ENCODE measurements at regions of chr9 and their contacts with region 1.

Region 1: GRCh38 chr9:129495534-129496325 is 125.2 kb downstream of the C9orf50 start:
- DNase-seq: peak; percentile 86
- ATAC-seq: peak; percentile 75
- H3K4me3 ChIP-seq: peak overlapping the region; percentile 56 to 79 (median 61)
- H3K27ac ChIP-seq: peak overlapping the region; percentile 92
- H3K4me1 ChIP-seq: peaks cover 79% of the 10 kb centered on the region
- H3K27me3 ChIP-seq: no peaks in the 10 kb centered on the region
- CTCF ChIP-seq: peak; percentile 50
- EP300 ChIP-seq: no peak
- POLR2A ChIP-seq: no peak; a peak in 1 of 4 replicates
- RAD21 ChIP-seq: peak; percentile 30; the same call in 1 of the 2 replicates

Region 2: GRCh38 chr9:129177791-129178559 is 317.8 kb before region 1 on chr9 and contains the start of gene IER5L:
- CTCF ChIA-PET with region 1: no interaction called
- POLR2A ChIA-PET with region 1: interaction called, 20 read pairs
- in situ Hi-C with region 1: no loop called
- intact Hi-C with region 1: no loop called
- DNase-seq: peak; percentile 90
- ATAC-seq: peak; percentile 77
- H3K4me3 ChIP-seq: peak within 1 kb of the TSS; percentile 83 to 94 (median 93)
- H3K27ac ChIP-seq: peak within 1 kb of the TSS; percentile 82
- H3K4me1 ChIP-seq: peaks cover 62% of the 10 kb centered on the region
- H3K27me3 ChIP-seq: peaks cover 6 to 36% of the 10 kb centered on the region in 2 experiments
- CTCF ChIP-seq: 0 out of 2 replicates have a peak, but pooled peaks have one; percentile 10
- EP300 ChIP-seq: 0 out of 4 replicates have a peak, but pooled peaks of 1 of the 2 experiments have one; percentile 3
- POLR2A ChIP-seq: peak in 1 of 2 experiments; percentile 98; a peak in 2 of 4 replicates
- RAD21 ChIP-seq: no peak
- total RNA-seq, gene IER5L: 2.5 and 3.3 TPM in 2 replicates

Region 3: DNA sequence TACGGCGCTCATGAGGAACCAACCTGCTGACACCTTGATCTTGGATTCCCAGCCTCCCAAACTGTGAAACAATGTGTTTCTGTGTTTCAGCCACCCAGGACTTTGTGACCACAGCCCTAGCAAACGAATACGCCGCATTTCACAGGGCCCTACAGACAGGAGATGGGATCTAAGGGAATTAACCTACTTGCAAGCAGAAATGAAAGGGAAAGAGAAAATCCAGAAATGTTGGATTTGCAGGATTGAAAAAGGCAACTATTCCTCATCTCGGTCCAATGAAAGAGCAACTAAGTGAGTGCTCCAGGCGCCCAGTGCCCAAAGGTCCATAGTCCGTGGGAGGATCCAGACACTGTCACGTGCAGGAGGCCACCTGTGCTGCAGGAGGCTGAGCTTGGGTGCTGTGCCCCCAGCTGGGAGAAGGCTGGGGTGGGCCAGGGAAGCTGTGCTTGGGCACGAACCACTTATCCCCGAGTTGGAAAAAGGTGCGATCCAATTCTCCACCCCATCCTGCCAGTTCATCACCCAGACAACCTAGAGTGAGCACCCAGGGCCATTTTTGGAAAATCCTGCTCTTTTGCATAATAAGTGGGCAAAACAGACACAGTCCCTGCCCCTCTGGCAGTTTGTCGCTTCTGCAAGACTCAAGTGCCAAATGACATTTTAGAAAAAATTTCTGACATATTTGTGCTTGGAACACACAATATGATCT is 52.8 kb before region 1 on chr9:
- CTCF ChIA-PET with region 1: no interaction called
- POLR2A ChIA-PET with region 1: interaction called, 15 read pairs
- in situ Hi-C with region 1: no loop called
- intact Hi-C with region 1: no loop called
- DNase-seq: peak; percentile 65
- ATAC-seq: peak; percentile 77
- H3K4me3 ChIP-seq: peak overlapping the region; percentile 8 to 54 (median 25); a peak in 5 of 6 replicates
- H3K27ac ChIP-seq: peak overlapping the region; percentile 32
- H3K4me1 ChIP-seq: peaks cover 56% of the 10 kb centered on the region
- H3K27me3 ChIP-seq: peaks cover 0 to 8% of the 10 kb centered on the region in 2 experiments; a peak in 3 of 5 replicates
- CTCF ChIP-seq: peak; percentile 53
- EP300 ChIP-seq: peak in 1 of 2 experiments; percentile 57; a peak in 2 of 4 replicates
- POLR2A ChIP-seq: peak in 1 of 2 experiments; percentile 29; a peak in 1 of 4 replicates
- RAD21 ChIP-seq: no peak

Region 4: DNA sequence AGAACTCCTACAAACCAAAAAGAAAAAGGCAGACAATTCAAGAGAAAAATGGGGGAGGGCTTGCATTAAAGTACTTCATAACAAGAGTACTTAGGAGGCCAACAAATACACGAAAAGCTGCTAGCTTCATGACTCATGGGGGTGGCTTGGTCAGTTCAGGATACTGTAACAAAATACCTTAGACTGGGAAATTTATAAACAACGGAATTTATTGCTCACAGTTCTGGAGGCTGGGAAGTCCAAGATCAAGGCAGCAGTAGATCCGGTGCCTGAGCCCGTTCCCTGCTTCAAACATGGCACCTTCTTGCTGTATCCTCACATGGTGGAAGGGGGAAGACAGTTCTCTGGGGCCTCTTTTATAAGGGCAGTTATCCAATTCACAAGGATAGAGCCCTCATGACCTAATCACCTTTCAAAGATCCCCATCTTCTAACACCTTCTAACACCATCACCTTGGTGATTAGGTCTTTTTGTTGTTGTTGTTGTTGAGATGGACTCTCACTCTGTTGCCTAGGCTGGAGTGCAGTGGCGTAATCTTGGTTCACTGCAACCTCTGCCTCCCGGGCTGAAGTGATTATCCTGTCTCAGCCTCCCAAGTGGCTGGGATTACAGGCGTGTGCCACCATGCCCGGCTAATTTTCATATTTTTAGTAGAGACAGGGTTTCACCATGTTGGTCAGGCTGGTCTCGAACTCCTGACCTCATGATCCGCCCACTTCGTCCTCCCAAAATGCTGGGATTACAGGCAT is 14.0 kb after region 1 on chr9:
- CTCF ChIA-PET with region 1: no interaction called
- POLR2A ChIA-PET with region 1: interaction called, 33 read pairs
- in situ Hi-C with region 1: no loop called
- intact Hi-C with region 1: no loop called
- DNase-seq: no peak
- ATAC-seq: no peak
- H3K4me3 ChIP-seq: no peak overlapping the region
- H3K27ac ChIP-seq: no peak overlapping the region
- H3K4me1 ChIP-seq: peaks cover 33% of the 10 kb centered on the region
- H3K27me3 ChIP-seq: no peaks in the 10 kb centered on the region
- CTCF ChIP-seq: no peak
- EP300 ChIP-seq: no peak
- POLR2A ChIP-seq: no peak
- RAD21 ChIP-seq: no peak

Region 5: DNA sequence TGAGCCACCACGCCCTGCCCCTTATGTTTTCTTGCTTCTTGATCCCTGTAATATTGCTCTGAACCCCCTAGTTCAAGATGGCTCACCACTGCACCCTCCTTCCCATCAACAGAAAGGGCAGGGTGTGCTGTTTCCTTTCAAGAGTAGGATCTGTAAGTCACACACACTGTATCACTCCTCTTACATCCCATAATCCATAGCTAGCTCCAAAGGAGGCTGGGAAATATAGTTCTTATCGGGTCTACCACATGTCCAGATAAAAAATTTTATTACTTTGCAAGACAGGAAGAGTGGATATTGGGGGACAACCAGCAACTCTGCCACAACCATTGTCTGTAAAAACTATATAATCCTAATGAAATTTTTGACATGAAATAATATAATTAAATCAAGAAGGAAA is 45.5 kb after region 1 on chr9:
- CTCF ChIA-PET with region 1: no interaction called
- POLR2A ChIA-PET with region 1: no interaction called
- in situ Hi-C with region 1: no loop called
- intact Hi-C with region 1: no loop called
- DNase-seq: no peak
- ATAC-seq: no peak
- H3K4me3 ChIP-seq: no peak overlapping the region
- H3K27ac ChIP-seq: no peak overlapping the region
- H3K4me1 ChIP-seq: no peaks in the 10 kb centered on the region
- H3K27me3 ChIP-seq: no peaks in the 10 kb centered on the region
- CTCF ChIP-seq: no peak
- EP300 ChIP-seq: no peak
- POLR2A ChIP-seq: no peak
- RAD21 ChIP-seq: no peak

Region 6: GRCh38 chr9:129584136-129584535 is 88.4 kb after region 1 on chr9:
- CTCF ChIA-PET with region 1: no interaction called
- POLR2A ChIA-PET with region 1: interaction called, 12 read pairs
- in situ Hi-C with region 1: no loop called
- intact Hi-C with region 1: no loop called
- DNase-seq: peak; percentile 82
- ATAC-seq: peak; percentile 74
- H3K4me3 ChIP-seq: no peak overlapping the region
- H3K27ac ChIP-seq: peak overlapping the region; percentile 45
- H3K4me1 ChIP-seq: peaks cover 70% of the 10 kb centered on the region
- H3K27me3 ChIP-seq: no peaks in the 10 kb centered on the region
- CTCF ChIP-seq: no peak
- EP300 ChIP-seq: no peak
- POLR2A ChIP-seq: no peak
- RAD21 ChIP-seq: no peak

Region 7: GRCh38 chr9:130461218-130461630 is 965.5 kb after region 1 on chr9:
- CTCF ChIA-PET with region 1: no interaction called
- POLR2A ChIA-PET with region 1: no interaction called
- in situ Hi-C with region 1: no loop called
- intact Hi-C with region 1: no loop called
- DNase-seq: peak; percentile 28
- ATAC-seq: peak; percentile 72
- H3K4me3 ChIP-seq: no peak overlapping the region
- H3K27ac ChIP-seq: no peak overlapping the region
- H3K4me1 ChIP-seq: peaks cover 12% of the 10 kb centered on the region
- H3K27me3 ChIP-seq: no peaks in the 10 kb centered on the region
- CTCF ChIP-seq: peak; percentile 99
- EP300 ChIP-seq: no peak
- POLR2A ChIP-seq: no peak
- RAD21 ChIP-seq: peak; percentile 98